Colonic mucosa (tissue), 4 donors: ENCODE measurements at regions of chr5 and their contacts with region 1.

Region 1: GRCh38 chr5:41932770-41933169 is 7.7 kb downstream of the FBXO4 start:
- DNase-seq: no peak
- H3K4me3 ChIP-seq: no peak overlapping the region
- H3K27ac ChIP-seq: no peak overlapping the region
- H3K4me1 ChIP-seq: no peaks in the 10 kb centered on the region
- H3K27me3 ChIP-seq: no peaks in the 10 kb centered on the region
- CTCF ChIP-seq: no peak

Region 2: DNA sequence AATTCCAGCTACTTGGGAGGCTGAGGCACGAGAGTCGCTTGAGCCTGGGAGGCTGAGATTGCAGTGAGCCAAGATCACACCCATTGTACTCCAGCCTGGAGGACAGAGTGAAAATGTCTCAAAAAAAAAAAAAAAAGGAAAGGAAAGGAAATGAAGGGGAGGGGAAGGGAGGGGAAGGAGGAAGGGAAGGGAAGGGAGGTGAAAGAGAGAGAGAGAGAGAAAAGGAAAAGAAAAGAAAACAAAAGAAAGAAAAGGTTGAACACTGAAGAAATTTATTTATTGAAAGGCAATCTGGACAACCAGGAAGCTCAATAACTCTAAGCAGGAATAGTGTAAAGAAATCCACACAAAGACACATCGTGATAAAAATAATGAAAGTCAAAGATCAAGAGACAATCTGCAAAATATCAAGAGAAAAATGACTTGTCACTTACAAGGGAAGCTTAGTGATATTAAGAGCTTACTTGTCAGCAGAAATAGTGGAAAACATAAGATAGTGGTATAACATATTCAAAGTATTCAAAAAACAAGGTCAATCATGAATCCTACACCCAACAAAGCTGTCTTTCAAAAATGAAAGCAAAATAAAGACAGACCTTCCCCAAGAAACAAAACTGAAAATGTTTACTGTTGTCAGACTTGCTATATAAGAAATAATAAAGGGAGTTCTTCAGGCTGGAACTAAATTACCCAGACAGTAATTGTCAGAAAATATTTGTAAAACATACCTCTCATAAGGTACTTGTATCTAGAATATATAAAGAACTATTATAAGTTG is 39.5 kb before region 1 on chr5:
- intact Hi-C with region 1: no loop called
- DNase-seq: no peak
- H3K4me3 ChIP-seq: no peak overlapping the region
- H3K27ac ChIP-seq: no peak overlapping the region
- H3K4me1 ChIP-seq: no peaks in the 10 kb centered on the region
- H3K27me3 ChIP-seq: no peaks in the 10 kb centered on the region
- CTCF ChIP-seq: no peak

Region 3: DNA sequence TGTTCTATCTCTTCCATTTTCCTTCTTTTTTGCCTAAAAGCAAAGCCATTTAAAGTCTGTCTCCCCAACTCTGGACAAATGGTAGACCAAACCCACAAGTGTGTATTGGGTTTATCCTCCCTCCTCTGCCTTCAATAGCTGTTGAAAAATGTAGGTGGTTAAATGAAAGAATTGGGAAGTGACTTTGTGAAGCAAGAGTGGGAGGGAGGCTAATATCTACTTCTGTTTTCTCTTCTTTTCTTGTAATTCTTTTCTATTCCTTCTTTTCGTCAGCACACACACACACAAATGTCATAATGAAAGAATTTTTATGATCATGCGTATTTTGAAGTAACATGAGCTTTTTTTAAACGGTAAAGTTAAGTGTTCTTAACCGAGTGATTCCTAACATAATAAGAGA is 827.7 kb after region 1 on chr5:
- intact Hi-C with region 1: loop called (anchors 5 kb)
- DNase-seq: no peak
- H3K4me3 ChIP-seq: no peak overlapping the region
- H3K27ac ChIP-seq: no peak overlapping the region
- H3K4me1 ChIP-seq: no peaks in the 10 kb centered on the region
- H3K27me3 ChIP-seq: peaks cover 5% of the 10 kb centered on the region
- CTCF ChIP-seq: no peak